ENCODE measurements at regions of chr3 and their contacts with region 1.

Region 1: GRCh38 chr3:46442576-46443562 is 21.8 kb downstream of the LTF start:
- DNase-seq: peak; percentile 31
- H3K4me3 Mint-ChIP-seq: no peak overlapping the region
- H3K27ac Mint-ChIP-seq: no peak overlapping the region
- H3K4me1 Mint-ChIP-seq: peaks cover 25% of the 10 kb centered on the region
- H3K27me3 Mint-ChIP-seq: peaks cover 4% of the 10 kb centered on the region

Region 2: DNA sequence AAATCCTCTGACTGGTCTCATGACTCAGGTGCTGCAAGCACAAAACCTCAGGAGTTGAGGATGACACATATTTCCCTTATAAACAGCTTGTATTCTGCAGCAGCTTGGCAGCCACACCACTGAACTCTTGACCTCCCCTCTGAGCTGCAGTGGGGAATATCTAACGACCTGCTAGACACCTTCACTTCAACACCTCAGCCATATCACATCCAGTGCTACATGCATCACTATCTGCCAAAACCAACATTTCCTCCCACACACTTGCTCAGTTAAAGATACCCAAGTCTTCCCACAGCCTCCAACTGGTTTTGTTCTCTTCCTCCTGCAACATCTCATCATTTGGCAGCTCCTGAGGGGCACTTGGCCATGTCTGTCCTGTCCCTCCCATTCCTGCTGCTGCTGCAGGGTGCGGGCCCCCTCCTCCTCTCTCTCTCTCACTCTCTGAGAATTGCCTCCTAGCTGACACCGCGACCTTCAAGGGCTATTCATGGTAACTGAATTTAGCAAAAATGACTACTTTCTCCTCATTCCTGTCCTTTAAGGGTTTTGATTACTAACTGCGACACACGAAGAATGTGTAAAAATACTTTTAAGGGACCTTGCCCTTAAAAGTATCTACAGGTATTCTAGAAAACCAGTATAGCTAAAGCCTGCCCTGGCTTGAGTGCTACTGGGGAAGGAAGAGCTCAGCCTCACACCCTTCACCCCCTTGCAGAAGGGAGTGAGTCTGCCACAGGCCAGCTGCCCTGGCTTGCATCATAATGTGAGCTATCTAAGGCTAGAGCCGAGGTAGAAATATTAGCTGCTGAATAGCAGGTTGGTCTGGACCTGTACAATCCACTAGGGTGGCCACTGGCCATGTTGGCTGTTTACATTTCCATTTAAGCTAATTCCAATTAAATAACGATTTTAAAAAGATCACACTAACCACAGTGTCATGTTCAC is 561.5 kb before region 1 on chr3:
- intact Hi-C with region 1: no loop called
- DNase-seq: no peak
- H3K4me3 Mint-ChIP-seq: no peak overlapping the region
- H3K27ac Mint-ChIP-seq: peak overlapping the region; percentile 3
- H3K4me1 Mint-ChIP-seq: peaks cover 24% of the 10 kb centered on the region
- H3K27me3 Mint-ChIP-seq: peaks cover 42% of the 10 kb centered on the region

Region 3: GRCh38 chr3:46078712-46079400 is 364.0 kb before region 1 on chr3:
- intact Hi-C with region 1: loop called (anchors 5 kb)
- DNase-seq: peak; percentile 82
- H3K4me3 Mint-ChIP-seq: no peak overlapping the region
- H3K27ac Mint-ChIP-seq: no peak overlapping the region
- H3K4me1 Mint-ChIP-seq: peaks cover 74% of the 10 kb centered on the region
- H3K27me3 Mint-ChIP-seq: peaks cover 7% of the 10 kb centered on the region

Region 4: GRCh38 chr3:46089237-46090011 is 353.4 kb before region 1 on chr3:
- intact Hi-C with region 1: loop called (anchors 2 kb)
- DNase-seq: no peak
- H3K4me3 Mint-ChIP-seq: no peak overlapping the region
- H3K27ac Mint-ChIP-seq: peak overlapping the region; percentile 27
- H3K4me1 Mint-ChIP-seq: peaks cover 67% of the 10 kb centered on the region
- H3K27me3 Mint-ChIP-seq: peaks cover 16% of the 10 kb centered on the region

Region 5: DNA sequence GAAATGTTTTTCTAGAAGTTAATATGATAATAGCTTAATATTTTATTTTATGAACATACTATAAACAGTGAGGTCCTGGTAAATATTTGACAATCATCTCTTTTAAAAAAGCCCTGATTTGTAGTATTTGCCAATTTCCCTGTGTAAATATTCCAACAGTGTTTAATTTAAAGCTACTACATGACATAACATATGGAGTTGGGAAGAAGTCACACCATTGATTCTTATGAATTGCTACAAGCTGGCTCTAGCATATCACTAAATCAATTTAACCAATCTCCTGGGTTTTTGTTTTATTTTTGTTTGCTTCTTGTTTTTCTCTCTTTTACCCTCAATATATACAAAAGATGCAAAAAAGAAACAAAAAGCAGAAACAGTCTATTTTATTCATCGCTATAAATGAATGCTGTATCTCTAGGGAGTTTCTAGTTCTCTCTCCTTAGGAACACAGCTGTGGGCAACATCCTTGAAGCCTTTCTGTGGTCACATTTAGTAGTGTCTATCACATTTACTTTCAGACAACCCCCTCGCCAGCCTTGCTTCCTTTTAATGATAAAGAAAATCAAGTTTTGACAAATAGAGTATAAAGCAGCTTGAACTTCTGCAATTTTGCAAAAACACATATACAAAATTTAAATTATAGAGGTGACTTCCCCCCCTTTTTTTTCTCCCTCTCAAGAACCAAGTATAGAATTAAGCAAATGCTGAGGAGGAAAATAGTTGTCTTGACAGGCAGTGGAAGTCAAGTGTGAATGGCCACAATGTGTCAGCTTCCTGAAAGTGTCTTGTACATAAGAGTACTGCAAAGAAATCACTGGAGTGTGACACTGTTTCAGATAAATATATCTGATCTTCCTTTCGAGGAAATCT is 256.2 kb before region 1 on chr3:
- intact Hi-C with region 1: no loop called
- DNase-seq: no peak
- H3K4me3 Mint-ChIP-seq: no peak overlapping the region
- H3K27ac Mint-ChIP-seq: peak overlapping the region; percentile 2
- H3K4me1 Mint-ChIP-seq: peaks cover 42% of the 10 kb centered on the region
- H3K27me3 Mint-ChIP-seq: peaks cover 7% of the 10 kb centered on the region

Region 6: GRCh38 chr3:46208167-46208704 is 234.6 kb before region 1 on chr3 and contains the start of gene CCR1:
- intact Hi-C with region 1: loop called (anchors 1 kb)
- DNase-seq: peak; percentile 58
- H3K4me3 Mint-ChIP-seq: peak within 1 kb of the TSS; percentile 78
- H3K27ac Mint-ChIP-seq: peak within 1 kb of the TSS; percentile 91
- H3K4me1 Mint-ChIP-seq: peaks cover 70% of the 10 kb centered on the region
- H3K27me3 Mint-ChIP-seq: no peaks in the 10 kb centered on the region
- total RNA-seq, gene CCR1: 22.6 and 23.2 TPM in 2 replicates

Region 7: DNA sequence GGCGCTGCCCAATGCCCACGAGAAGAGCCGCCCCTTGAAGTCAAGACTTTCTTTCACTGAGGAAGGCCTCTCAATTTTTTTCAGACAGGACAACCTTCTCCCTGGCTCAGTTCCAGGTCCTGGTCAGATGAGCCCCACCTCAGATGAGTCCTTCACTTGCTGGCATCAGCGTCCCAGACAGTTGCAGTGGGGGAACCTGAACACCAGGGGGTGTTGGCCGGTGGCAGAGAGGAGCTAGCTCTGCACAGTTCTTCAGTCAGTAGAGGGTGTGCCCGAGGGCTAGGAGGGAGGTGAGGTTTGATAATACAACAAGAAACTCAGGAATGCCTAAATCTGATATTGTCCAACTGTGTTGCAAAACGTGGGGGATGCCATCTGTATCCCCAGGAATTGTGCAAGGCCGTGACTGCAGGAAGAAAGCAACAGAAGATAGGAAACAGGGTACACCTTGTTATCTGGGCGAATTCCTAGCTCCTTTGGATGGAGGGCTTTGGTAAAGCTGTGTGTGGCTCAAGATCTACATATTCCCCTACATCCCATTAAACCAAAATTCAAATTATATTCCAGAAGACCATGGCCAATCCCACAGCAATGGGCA is 166.3 kb before region 1 on chr3:
- intact Hi-C with region 1: loop called (anchors 5 kb)
- DNase-seq: peak; percentile 68
- H3K4me3 Mint-ChIP-seq: no peak overlapping the region
- H3K27ac Mint-ChIP-seq: peak overlapping the region; percentile 21
- H3K4me1 Mint-ChIP-seq: peaks cover 62% of the 10 kb centered on the region
- H3K27me3 Mint-ChIP-seq: peaks cover 11% of the 10 kb centered on the region

Region 8: DNA sequence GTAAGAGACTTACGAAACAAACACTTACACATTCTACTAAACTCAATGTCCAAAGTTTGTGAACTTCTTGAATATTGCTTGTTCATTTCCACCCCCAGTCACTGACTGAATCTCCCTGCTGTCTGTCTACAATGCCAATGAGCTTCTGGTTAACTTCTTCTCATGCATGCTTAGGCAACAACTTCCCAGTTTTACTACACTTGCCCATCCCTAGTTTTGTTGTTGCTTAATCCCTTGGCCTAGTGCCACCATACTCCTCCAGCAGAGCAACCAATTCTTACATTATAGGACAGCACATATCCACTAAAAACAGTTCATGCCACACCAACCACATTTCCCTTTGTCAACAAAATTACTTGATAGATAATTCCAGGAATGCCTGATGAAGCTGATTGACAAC is 129.9 kb before region 1 on chr3:
- intact Hi-C with region 1: no loop called
- DNase-seq: no peak
- H3K4me3 Mint-ChIP-seq: no peak overlapping the region
- H3K27ac Mint-ChIP-seq: no peak overlapping the region
- H3K4me1 Mint-ChIP-seq: peaks cover 7% of the 10 kb centered on the region
- H3K27me3 Mint-ChIP-seq: peaks cover 21% of the 10 kb centered on the region

Region 9: GRCh38 chr3:46378426-46378942 is 64.4 kb before region 1 on chr3:
- intact Hi-C with region 1: loop called (anchors 2 kb)
- DNase-seq: peak; percentile 55
- H3K4me3 Mint-ChIP-seq: no peak overlapping the region
- H3K27ac Mint-ChIP-seq: no peak overlapping the region
- H3K4me1 Mint-ChIP-seq: peaks cover 56% of the 10 kb centered on the region
- H3K27me3 Mint-ChIP-seq: peaks cover 8% of the 10 kb centered on the region

Region 10: DNA sequence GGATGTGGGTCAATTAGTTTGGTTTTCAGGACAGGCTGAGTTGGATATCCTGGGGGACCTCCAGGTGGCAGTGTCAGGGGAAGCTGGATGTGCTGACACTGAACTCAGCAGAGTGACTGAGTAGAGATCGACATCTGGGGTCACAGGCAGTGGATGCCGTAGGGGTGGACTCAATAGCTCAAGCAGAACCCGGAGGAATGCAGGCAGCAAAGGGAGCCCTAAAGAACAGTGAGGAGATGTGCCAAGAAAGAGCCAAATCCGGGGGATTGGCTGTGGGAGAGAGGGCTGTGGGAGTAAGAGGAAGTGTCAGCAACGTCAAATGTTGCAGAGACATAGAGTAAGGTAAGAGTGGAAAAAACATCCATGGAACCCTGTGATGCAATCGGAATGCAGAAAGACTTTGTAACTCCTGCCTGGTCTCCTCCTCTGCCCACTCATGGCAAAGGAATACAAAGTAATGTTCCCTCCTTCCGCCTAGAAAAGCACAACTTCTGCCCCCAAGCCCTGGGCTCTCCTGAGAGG is 47.6 kb before region 1 on chr3:
- intact Hi-C with region 1: loop called (anchors 1 kb)
- DNase-seq: no peak
- H3K4me3 Mint-ChIP-seq: no peak overlapping the region
- H3K27ac Mint-ChIP-seq: no peak overlapping the region
- H3K4me1 Mint-ChIP-seq: peaks cover 9% of the 10 kb centered on the region
- H3K27me3 Mint-ChIP-seq: peaks cover 9% of the 10 kb centered on the region

Measured in activated T-helper 1 cell treated with anti-CD3 and anti-CD28 coated beads, Interleukin-12 subunit alpha, Interleukin-12 subunit beta, Interleukin-2, Interleukin-4 antibody, amounts not matched to agents 30 ng/mL and 10 ng/mL and 1 ng/mL, durations not matched to agents 14 hours and 24 hours and 36 hours (primary cell).